Naive thymus-derived CD4-positive, alpha-beta T cell (primary cell): ENCODE measurements at regions of chr3 and their contacts with region 1.

Region 1: GRCh38 chr3:30286007-30286669 is 320.3 kb upstream of the TGFBR2 start:
- DNase-seq: no peak
- ATAC-seq: no peak
- H3K4me3 ChIP-seq: no peak overlapping the region
- H3K4me3 Mint-ChIP-seq: no peak overlapping the region
- H3K27ac ChIP-seq: no peak overlapping the region
- H3K27ac Mint-ChIP-seq: no peak overlapping the region
- H3K4me1 ChIP-seq: peaks cover 0 to 9% of the 10 kb centered on the region in 2 donors
- H3K4me1 Mint-ChIP-seq: peaks cover 11 to 26% (median 14%) of the 10 kb centered on the region in 7 donors
- H3K27me3 ChIP-seq: no peaks in the 10 kb centered on the region
- H3K27me3 Mint-ChIP-seq: no peaks in the 10 kb centered on the region

Region 2: GRCh38 chr3:30253832-30254231 is 32.3 kb before region 1 on chr3:
- CTCF ChIA-PET with region 1: no interaction called
- POLR2A ChIA-PET with region 1: no interaction called
- intact Hi-C with region 1: loop called in 1 of 2 experiments (anchors 5 kb)
- DNase-seq: no peak
- ATAC-seq: no peak
- H3K4me3 ChIP-seq: no peak overlapping the region
- H3K4me3 Mint-ChIP-seq: no peak overlapping the region
- H3K27ac ChIP-seq: no peak overlapping the region
- H3K27ac Mint-ChIP-seq: no peak overlapping the region
- H3K4me1 ChIP-seq: no peaks in the 10 kb centered on the region
- H3K4me1 Mint-ChIP-seq: peaks cover 0 to 6% (median 0%) of the 10 kb centered on the region in 7 donors
- H3K27me3 ChIP-seq: no peaks in the 10 kb centered on the region
- H3K27me3 Mint-ChIP-seq: peaks cover 0 to 3% (median 0%) of the 10 kb centered on the region in 5 donors